ENCODE measurements at regions of chr16 and their contacts with region 1.

Region 1: DNA sequence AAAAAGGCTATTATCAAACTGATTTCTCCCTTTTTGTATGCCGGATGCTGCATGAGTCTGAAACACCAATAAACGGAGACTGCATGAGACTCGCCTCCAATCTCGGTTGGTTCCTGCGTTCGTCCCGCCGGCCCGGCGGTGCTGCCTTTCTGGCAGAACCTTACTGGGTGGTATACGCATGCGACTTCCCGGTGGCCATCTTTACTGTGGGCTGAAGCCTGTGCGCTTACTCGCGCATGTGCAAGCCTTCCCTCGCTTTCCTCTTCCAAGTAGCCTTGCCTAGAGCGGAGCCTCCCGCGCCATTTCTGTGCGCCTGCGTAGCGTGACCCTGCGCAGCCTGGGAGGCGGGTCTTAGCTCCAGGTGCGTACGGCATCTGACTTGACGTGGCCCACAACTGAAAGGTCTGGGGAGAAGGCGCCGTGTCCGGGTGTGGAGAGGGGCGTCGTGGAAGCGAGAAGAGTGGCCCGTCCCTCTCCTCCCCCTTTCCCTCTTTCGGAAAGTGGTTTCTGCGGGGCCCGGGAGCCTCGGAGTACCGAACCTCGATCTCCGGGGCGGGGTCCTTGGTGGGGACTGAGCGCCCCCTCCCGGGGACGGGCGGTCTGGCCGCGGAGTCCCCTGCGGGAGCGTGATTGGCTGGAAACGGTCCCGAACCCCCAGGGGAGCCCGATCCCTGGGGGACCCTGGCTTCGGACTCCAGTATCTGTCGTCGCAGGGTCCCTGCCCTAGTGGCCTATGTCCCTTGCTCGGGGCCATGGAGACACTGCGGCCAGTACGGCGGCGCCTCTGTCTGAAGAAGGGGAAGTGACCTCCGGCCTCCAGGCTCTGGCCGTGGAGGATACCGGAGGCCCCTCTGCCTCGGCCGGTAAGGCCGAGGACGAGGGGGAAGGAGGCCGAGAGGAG is at the start of gene PAGR1:
- DNase-seq: peak; percentile 99
- ATAC-seq: peak; percentile 86 to 87
- H3K4me3 ChIP-seq: peak within 1 kb of the TSS; percentile 62
- H3K27ac ChIP-seq: peak within 1 kb of the TSS; percentile 98
- H3K4me1 ChIP-seq: peaks cover 2% of the 10 kb centered on the region
- H3K27me3 ChIP-seq: no peaks in the 10 kb centered on the region
- total RNA-seq, gene PAGR1: 13.7 to 20.3 (median 15.2) TPM

Region 2: DNA sequence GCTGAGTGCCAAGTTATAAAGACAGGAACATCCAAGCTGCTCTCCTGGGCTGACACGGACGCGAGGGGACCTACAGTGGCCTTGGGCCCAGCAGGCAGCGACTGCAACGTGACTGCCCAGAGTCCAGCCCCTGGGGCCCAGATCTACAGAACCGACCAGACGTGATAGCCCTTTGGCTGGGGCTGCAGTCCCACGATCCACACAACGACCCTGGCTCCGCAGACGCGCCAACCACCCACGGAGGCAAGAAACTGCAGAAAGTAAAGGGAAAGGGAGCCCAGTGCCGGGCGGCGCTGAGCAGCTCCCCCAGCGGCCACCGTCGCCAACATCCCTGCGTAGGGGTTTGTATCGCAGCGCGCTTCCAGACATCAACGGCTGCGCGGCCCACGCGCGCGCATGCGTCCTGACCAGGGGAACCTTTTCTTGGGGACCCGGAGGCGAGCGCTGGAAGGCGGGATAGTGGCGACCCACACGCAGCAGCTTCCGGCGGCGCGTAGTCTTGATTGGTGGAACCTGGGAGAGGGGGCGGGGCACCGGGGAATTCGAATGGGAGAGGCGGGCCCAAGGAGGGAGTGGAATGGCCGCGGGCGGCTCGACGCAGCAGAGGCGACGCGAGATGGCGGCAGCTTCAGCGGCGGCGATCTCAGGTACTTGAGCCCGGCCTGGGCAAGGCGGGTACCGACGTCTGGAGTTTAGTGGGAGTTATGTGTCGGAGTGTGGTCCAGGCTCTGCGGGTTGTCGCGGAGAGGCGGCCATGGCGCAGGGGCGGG is 25.7 kb before region 1 on chr16 and contains the start of gene KIF22:
- intact Hi-C with region 1: loop called in 1 of 4 experiments (anchors 2 kb)
- DNase-seq: peak; percentile 100
- ATAC-seq: peak; percentile 99
- H3K4me3 ChIP-seq: peak within 1 kb of the TSS; percentile 57
- H3K27ac ChIP-seq: peak within 1 kb of the TSS; percentile 69
- H3K4me1 ChIP-seq: no peaks in the 10 kb centered on the region
- H3K27me3 ChIP-seq: no peaks in the 10 kb centered on the region
- total RNA-seq, gene KIF22: 19.0 to 53.8 (median 41.6) TPM

Region 3: GRCh38 chr16:29995911-29996772 is 180.1 kb after region 1 on chr16 and contains the start of gene INO80E:
- intact Hi-C with region 1: loop called in 1 of 4 experiments (anchors 10 kb)
- DNase-seq: peak; percentile 99 to 100 (median 100)
- ATAC-seq: peak; percentile 98 to 99
- H3K4me3 ChIP-seq: peak within 1 kb of the TSS; percentile 73
- H3K27ac ChIP-seq: peak within 1 kb of the TSS; percentile 92
- H3K4me1 ChIP-seq: peaks cover 7% of the 10 kb centered on the region
- H3K27me3 ChIP-seq: no peaks in the 10 kb centered on the region
- total RNA-seq, gene INO80E: 32.7 to 44.6 (median 37.1) TPM

Measured in right cardiac atrium (tissue), 5 donors.